Activated naive CD8-positive, alpha-beta T cell treated with anti-CD3 and anti-CD28 coated beads, Interleukin-2, amount 10 ng/mL, durations not matched to agents 7 days and 5 days (primary cell): ENCODE measurements at regions of chr11 and their contacts with region 1.

Region 1: DNA sequence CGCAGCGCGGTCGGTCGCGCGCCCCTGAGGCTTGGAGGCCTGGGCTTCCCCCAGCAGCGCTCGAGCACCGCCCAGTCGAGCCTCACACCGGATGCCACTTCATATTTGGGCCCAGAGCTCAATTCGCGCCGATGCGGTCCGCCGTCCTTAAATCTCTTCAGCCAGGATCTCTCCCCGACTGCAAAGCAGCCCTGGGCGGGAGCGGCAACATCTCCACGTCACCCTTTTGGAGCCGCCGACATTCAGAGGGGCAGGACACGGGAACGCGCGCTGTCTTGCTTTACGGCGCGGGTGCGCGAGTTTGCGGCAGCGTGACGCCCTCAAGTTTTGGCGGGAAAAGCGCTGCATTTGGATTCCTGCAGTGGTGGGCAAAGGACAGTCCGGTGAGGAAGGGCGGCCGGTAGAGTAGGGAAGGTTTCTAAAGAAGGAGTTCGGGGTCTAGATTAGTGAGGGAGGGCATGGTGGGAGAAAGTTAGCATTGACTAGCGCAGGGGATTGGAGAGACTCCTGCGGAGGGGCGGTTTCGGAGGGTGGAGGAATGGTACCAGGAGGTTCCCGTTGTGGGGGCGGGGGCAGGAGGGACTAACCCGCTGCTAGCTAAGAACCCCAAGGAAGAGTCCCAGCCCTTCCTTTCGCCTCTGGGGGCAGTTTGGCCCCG is 796 bp downstream of the CHEK1 start:
- DNase-seq: peak; percentile 89
- ATAC-seq: peak; percentile 91
- H3K4me3 Mint-ChIP-seq: peak overlapping the region; percentile 92
- H3K27ac Mint-ChIP-seq: peak overlapping the region; percentile 95
- H3K4me1 Mint-ChIP-seq: peaks cover 23% of the 10 kb centered on the region
- H3K27me3 Mint-ChIP-seq: no peaks in the 10 kb centered on the region

Region 2: DNA sequence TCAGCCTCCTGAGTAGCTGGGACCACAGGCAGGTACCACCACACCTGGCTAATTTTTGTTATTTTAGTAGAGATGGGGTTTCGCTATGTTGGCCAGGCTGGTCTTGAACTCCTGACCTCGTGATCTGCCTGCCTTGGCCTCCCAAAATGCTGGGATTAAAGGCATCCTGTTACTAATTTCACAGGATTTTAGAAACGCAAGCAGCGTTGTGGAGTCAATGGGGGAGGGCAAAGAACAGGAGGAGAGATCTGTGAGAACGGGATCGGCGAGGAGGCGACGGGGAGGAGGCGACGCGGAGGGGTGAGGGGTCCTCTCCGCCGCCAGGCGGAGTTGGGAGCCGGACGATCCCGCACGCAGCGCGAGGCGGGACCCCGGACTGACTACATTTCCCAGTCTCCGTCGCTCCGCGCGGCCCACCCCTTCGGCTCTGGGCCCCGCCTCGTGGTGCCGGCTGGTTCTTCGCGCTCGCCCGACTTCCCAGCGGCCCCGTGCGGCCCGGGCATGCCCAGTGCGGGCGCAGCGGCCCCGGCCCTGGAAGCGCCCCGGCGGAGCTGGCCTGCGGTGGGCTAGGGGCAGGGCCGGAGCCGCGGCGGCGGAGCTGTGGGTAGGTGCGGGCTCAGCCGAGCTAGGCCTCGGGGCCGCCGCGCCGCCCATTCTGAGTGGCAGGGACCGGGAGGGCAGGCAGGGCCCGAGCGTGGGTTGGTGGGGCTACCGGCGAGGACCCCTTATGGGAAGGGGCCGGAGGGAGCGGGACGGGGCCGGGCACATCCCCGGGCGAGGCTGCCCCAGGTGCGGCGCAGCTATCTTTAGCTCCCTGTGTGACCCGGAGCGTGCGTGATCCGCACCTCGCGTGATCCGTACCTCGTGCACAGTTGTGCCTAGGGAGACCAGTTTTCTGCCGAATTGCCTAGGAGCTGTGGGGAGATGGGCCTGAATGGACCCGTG is 56.5 kb before region 1 on chr11 and contains the start of gene EI24:
- POLR2A ChIA-PET with region 1: interaction called, 16 read pairs
- DNase-seq: peak; percentile 90
- ATAC-seq: peak; percentile 99
- H3K4me3 Mint-ChIP-seq: peak within 1 kb of the TSS; percentile 93
- H3K27ac Mint-ChIP-seq: peak within 1 kb of the TSS; percentile 92
- H3K4me1 Mint-ChIP-seq: peaks cover 28% of the 10 kb centered on the region
- H3K27me3 Mint-ChIP-seq: no peaks in the 10 kb centered on the region
- total RNA-seq, gene EI24: 39.0 to 39.2 TPM

Region 3: GRCh38 chr11:125592305-125593112 is 33.2 kb before region 1 on chr11 and contains the start of gene STT3A:
- POLR2A ChIA-PET with region 1: interaction called, 44 read pairs
- DNase-seq: peak; percentile 93
- ATAC-seq: peak; percentile 98
- H3K4me3 Mint-ChIP-seq: peak within 1 kb of the TSS; percentile 100
- H3K27ac Mint-ChIP-seq: peak within 1 kb of the TSS; percentile 94
- H3K4me1 Mint-ChIP-seq: peaks cover 36% of the 10 kb centered on the region
- H3K27me3 Mint-ChIP-seq: no peaks in the 10 kb centered on the region
- total RNA-seq, gene STT3A: 86.1 to 86.7 TPM

Region 4: DNA sequence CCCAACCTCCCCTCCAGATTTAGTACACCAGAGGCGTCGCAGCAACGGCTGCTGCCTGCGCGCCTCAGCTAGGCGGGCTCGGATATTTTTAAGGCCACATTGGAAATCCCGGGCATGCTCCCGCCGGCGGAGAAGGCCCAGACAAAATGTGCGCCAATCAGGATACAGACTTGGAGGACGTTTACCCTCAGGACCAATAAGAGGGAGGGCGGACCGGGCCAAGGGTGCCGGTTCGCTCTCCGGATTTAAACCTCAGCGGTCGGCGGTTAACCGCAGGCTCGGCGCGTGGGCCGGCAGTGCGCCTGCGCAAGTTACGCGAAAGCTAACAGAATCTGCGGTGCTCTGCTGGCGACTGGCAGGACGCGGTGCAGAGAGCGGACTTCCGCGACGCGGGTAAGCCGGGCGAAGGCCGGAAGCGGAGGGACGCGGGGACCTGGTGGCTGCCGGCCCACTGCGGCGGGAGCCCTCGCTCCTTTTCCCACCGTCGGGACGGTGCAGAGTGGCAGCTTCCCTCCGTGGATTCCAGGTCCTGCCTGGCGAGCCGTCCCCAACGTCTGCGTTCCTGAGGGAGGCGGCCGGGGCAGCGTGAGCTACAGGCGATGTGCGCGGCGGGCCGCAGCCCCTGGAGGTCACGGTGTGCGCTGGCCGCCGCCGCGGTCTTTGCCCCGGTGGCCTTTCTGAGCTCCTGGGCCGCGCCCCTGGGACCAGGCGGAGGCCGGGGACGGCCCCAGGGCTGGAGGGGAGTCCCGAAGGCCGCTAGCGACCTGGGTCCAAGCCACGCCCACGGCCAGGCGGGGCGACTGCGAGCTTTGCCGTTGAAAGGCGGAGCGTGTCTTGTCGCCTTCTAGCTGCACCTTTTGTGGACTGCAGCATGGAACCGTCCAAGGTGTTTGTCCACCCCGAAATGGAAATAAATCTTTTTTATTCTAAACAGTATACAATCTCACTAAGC is 261.9 kb after region 1 on chr11 and contains the start of gene HYLS1:
- POLR2A ChIA-PET with region 1: interaction called, 16 read pairs
- DNase-seq: peak; percentile 100
- ATAC-seq: peak; percentile 84
- H3K4me3 Mint-ChIP-seq: peak within 1 kb of the TSS; percentile 84
- H3K27ac Mint-ChIP-seq: peak within 1 kb of the TSS; percentile 91
- H3K4me1 Mint-ChIP-seq: peaks cover 20% of the 10 kb centered on the region
- H3K27me3 Mint-ChIP-seq: no peaks in the 10 kb centered on the region
- total RNA-seq, gene HYLS1: 9.6 to 10.4 TPM